ENCODE measurements at regions of chr3 and their contacts with region 1.

Region 1: DNA sequence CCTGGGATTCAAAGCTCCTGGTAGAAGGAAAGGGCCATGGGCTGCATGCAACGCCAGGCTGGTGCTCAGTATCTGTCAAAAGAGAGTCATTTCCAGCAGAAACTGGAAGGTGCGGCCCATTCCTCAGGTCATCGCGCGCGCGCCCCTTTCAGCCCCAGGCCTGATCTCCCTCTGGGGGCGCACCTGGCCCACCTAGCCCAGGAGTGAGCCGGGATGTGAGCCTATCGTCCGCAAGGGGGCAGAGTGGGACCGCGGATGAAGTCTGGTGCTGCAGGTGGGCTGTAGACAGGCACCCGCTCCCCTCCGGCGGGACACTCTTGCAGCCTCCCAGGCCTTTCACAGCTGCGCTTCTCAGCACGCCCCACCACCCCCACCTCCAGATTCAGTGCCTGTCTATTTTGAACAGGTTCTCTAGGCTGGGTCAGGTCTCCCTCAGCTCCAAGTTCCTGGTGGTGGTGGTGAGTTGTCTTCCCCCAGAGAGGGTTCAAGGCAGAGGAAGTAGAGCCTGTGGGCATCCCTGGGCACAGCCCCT is 5.8 kb upstream of the RPL29 start:
- DNase-seq: peak; percentile 89

Region 2: DNA sequence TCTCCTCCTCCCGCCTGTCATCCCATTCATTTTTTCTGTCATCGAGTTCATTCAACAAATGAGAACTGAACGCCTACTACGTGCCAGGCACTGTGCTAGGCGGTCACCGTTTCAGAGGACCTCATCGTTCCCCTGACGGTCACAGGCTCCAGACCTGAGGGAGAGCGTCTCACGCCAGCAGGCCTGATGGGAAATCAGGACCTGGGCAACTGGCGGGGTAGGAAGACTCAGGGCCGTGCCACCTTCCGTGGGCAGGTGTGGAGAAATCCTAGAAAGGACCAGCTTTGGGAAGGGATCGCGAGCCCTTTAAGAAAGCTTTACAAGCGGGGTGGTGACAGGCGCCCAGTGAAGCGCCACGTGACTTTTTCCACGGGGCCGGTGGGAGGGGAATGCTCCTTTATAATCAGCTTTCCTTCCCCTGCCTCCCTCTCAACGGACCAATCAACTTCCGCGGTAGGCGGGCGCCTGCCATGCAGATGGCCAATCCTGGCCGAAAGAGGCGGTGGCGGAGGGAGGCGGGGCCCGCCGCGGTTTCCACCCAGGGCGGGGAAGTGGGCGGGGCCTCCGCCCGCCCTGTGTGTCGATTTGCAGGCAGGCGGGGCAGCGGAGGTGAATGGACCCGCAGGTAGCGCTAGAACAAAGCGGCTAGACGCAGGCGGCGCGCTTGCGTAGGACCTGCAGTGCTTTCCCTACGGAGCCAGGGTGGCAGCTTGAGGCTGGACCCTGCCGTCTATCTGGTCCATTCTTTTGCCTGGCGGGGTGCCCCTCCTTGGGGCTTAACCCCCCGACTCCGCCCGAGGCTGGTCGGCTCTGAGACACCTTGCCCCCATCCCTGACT is 55.7 kb after region 1 on chr3:
- intact Hi-C with region 1: loop called (anchors 1 kb)
- DNase-seq: peak; percentile 100

Region 3: GRCh38 chr3:52108302-52109232 is 107.1 kb after region 1 on chr3:
- intact Hi-C with region 1: loop called (anchors 1 kb)
- DNase-seq: peak; percentile 85

Region 4: GRCh38 chr3:52123106-52123725 is 121.7 kb after region 1 on chr3:
- intact Hi-C with region 1: loop called (anchors 1 kb)
- DNase-seq: peak; percentile 90

Region 5: GRCh38 chr3:52144034-52144795 is 142.7 kb after region 1 on chr3:
- intact Hi-C with region 1: loop called (anchors 1 kb)
- DNase-seq: peak; percentile 89

Region 6: DNA sequence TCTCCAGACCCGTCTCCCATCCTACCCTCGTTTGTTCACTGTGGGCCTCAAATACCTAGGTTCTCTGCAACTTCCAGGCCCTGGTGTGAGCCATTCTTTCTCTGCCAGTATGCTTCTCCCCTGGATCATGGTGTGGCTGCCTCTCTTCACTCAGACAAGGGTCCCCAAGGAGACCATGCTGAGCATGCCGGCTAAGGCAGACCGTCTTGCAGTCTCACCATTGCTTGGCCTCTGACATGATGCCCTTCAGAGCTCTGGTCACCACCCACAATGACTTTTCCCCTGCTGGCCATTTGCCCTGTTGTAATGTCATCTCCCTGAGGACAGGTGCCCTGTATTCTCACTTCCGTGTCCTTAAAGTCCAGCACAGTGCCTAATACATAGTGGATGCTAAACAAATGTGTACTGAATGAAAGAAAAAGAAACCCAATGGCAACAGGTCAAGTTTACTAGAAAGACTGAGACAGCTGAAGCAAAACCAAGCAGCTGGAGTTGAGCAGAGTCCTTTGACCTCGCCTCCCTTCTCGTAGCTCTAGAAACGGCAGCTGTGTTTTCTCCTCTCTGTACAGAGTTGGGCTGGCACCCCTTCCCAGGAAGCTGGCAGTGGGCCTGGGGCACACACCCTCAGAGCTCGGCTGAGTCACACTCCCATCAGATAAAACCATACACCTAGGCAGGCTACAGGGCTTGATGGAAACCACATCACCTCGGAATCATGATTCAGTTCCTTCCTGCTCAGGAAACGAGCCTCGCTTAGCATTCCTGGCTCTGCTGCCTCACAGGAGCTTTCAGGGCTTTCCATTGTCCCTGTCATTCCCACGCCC is 215.3 kb after region 1 on chr3:
- intact Hi-C with region 1: loop called (anchors 10 kb)
- DNase-seq: no peak

Region 7: DNA sequence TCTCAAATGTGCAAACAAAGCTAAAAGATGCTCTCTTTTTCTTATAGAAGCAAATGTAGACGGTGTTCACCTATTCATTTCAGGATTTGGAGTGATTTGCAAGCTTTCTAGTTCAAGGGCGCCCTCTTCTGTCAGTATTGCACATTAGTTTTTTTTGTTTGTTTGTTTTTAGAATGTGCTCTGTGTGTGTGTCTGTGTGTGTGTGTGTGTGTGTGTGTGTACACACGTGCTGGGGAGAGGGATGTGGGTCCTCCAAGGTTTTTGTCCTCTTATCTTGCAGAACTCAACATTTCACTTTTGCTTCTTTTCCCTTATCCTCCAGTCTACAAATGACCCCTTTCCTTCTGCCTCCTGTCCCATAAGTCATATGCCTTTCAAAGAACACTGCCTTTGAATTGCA is 338.1 kb after region 1 on chr3:
- intact Hi-C with region 1: loop called (anchors 10 kb)
- DNase-seq: no peak

Measured in cardiac septum (tissue), 1 donor.